Head of caudate nucleus (tissue), 42 donors: ENCODE measurements at regions of chr1 and their contacts with region 1.

Region 1: DNA sequence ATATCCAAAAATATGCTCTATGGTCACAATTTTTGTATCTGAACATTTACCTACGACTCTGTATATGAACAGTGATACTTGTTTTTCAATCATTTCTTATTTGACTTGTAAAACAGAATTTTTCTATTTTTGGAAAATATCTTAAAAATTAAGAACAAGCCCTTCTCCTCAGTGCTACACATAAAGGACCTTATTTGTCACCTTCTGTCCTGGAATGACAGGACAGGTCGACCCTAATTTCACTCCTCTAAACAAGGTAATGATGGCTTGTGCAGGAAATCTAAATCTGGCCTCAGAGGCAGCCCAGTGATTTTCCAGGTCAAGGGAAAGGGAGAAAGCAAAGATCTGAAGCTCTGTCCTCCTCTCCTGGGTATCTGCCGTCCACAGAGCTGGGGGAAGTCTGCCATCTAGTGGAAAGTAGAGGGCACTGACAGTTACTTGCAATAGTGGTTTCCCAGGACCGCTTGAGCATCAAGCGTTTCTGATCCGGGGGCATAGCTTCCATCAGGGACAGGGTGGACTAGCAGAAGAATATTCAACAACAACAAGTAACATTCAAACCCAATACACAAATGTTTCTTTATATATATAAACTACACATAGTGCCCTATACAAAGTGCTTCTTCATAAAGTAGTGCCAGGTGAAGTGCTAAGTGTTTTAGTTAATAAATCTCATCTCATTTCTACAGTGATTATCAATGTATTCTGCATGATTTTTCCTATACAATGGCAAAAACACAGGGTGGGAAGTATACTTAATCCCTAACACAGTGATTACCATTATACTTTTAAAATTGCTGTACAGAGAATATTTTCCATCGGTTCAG is 74.6 kb downstream of the SLC25A24 start:
- DNase-seq: peak; percentile 16 to 89 (median 70)

Region 2: DNA sequence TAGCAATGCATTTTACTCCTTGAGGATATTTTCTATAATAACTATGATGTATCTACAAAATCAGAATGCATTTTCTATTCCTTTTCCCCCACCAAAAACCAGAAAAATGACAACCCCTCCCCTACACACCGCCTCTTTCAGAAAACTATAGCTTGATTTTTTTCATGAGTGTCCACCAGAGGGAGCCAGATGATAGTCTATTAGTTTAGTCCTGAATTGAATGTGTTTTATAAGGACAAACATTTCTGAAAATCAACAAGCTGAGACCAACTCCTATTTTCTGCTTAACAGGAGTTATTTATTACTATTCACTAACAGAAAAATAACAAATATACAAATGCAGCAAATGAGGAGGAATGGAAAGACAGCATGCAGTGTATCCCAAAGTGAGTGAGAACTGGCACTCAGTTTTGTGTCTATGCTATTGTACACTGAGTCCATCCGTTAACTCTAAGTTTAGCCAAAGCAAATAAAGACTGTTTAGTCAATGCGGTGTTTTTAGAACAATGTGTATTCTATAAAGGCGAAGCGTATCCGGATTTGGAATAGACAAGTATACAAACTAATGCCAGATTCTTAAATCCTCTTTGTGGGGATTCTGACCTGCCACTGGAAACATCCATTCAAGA is 343.2 kb before region 1 on chr1:
- intact Hi-C with region 1: loop called (anchors 2 kb)
- DNase-seq: peak in 17 of 42 donors; percentile 14 to 80 (median 53)